ENCODE measurements at regions of chrX and their contacts with region 1.

Region 1: GRCh38 chrX:21985332-21985777 is 44.8 kb downstream of the SMS start:
- DNase-seq: peak; percentile 74
- H3K4me3 ChIP-seq: no peak overlapping the region
- H3K27ac ChIP-seq: peak overlapping the region in 1 of 4 donors; percentile 27
- H3K4me1 ChIP-seq: no peaks in the 10 kb centered on the region
- H3K27me3 ChIP-seq: no peaks in the 10 kb centered on the region
- CTCF ChIP-seq: peak; percentile 75 to 89 (median 82)
- EP300 ChIP-seq: no peak
- POLR2A ChIP-seq: no peak

Region 2: DNA sequence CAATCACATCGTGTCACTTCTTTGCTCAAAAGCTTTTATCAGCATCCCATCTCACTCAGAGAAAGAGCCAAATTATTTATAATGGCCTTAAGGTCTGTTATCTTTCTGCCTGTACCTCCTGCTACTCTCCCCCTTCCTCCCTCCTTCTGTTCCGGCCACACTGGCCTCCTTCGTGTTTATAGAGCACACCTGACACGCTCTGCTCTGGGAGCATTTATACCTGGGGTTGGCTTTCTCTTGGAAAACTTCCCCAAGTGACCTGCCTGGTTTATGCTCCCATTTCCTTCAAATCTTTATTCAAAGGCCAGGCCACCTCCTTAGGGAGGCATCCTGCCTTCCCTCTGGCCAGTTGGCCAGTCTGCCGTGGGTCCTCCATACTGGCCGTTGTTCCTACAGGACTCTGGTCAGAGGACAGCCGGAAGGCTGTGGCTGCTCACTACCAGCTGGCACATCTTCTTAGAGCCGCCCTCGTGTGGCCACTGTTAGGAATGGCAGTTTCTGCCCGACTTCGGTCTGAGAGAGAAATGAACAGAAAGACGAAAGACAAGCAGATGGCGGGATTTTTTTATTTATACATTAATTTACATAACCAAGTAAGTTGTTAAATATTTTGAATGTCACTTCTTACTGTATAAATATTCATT is 207.2 kb after region 1 on chrX:
- intact Hi-C with region 1: loop called (anchors 5 kb)
- DNase-seq: peak; percentile 80
- H3K4me3 ChIP-seq: no peak overlapping the region
- H3K27ac ChIP-seq: no peak overlapping the region
- H3K4me1 ChIP-seq: no peaks in the 10 kb centered on the region
- H3K27me3 ChIP-seq: no peaks in the 10 kb centered on the region
- CTCF ChIP-seq: peak; percentile 25 to 60 (median 46)
- EP300 ChIP-seq: no peak
- POLR2A ChIP-seq: no peak

Region 3: DNA sequence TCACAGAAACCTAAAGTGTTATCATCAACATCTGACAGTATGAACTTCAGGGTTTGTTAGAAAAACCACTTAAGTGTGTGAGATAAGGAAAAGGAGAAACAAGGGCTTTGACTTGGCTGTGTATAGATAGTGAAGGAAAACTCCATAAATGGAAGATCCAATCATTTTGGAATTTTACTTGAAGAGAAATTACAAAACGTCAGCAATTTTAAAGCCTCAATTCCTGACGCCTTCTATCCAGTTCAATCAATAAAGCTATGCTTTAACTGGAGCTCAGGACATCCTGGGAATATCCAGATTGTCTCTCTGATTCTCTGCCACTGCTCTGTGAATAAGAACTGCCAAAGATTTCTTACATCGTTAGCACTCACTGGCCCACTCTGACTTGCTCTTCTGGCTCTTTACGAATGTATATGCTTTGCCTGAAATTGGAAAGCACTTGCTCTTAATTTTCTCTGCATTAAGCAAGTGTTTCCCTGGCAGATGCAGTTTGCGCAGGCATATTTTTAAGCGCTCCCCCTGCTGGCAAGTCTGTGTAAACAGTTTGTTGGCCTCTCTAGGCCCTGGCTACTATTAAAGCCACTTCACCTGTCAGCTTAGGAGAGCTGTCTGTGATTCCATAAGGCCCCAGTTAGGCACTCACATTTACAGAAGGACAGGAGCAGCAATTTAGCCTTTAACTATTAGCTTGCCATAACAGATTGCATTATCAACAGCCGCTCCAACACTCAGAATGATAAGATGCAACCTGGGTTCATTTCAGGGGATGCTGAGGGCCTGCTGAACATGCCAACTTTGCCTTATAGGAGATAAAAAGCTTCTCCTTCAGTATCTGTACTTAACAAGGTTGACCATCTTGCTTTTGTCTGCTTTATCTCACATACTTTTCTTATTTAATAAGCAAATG is 763.0 kb after region 1 on chrX:
- intact Hi-C with region 1: loop called (anchors 5 kb)
- DNase-seq: no peak
- H3K4me3 ChIP-seq: no peak overlapping the region
- H3K27ac ChIP-seq: no peak overlapping the region
- H3K4me1 ChIP-seq: peaks cover 0 to 12% (median 0%) of the 10 kb centered on the region in 4 donors
- H3K27me3 ChIP-seq: no peaks in the 10 kb centered on the region
- CTCF ChIP-seq: peak; percentile 26 to 59 (median 42)
- EP300 ChIP-seq: no peak
- POLR2A ChIP-seq: no peak

Region 4: GRCh38 chrX:23327104-23327503 is 1341.7 kb after region 1 on chrX:
- intact Hi-C with region 1: loop called (anchors 10 kb)
- DNase-seq: no peak
- H3K4me3 ChIP-seq: no peak overlapping the region
- H3K27ac ChIP-seq: no peak overlapping the region
- H3K4me1 ChIP-seq: no peaks in the 10 kb centered on the region
- H3K27me3 ChIP-seq: no peaks in the 10 kb centered on the region
- CTCF ChIP-seq: no peak
- EP300 ChIP-seq: no peak
- POLR2A ChIP-seq: no peak

Region 5: GRCh38 chrX:23554304-23554703 is 1568.9 kb after region 1 on chrX:
- intact Hi-C with region 1: loop called (anchors 5 kb)
- DNase-seq: no peak
- H3K4me3 ChIP-seq: no peak overlapping the region
- H3K27ac ChIP-seq: no peak overlapping the region
- H3K4me1 ChIP-seq: no peaks in the 10 kb centered on the region
- H3K27me3 ChIP-seq: no peaks in the 10 kb centered on the region
- CTCF ChIP-seq: peak in 3 of 4 experiments; percentile 25 to 35 (median 29)
- EP300 ChIP-seq: no peak
- POLR2A ChIP-seq: no peak

Region 6: DNA sequence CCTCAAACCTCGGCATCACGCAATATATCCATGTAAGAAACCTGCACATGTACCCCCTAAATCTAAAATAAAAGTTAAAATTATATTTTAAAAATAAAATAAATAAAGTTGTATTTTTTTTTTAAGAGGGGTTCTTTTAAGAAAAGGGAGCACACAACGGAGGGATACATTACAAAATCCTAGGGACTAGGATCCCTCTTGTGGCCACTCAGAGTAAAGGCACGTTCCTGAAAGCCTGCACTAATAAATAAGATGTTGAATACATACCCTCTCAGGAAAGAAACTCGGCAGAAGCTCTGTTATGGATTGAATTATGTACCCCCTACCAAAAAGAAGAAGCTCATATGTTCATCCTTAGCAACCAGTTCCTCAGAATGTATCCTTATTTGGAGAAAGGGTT is 1631.0 kb after region 1 on chrX:
- intact Hi-C with region 1: loop called (anchors 5 kb)
- DNase-seq: no peak
- H3K4me3 ChIP-seq: no peak overlapping the region
- H3K27ac ChIP-seq: no peak overlapping the region
- H3K4me1 ChIP-seq: no peaks in the 10 kb centered on the region
- H3K27me3 ChIP-seq: no peaks in the 10 kb centered on the region
- CTCF ChIP-seq: peak in 3 of 4 experiments; percentile 27 to 54 (median 29)
- EP300 ChIP-seq: no peak
- POLR2A ChIP-seq: no peak

Measured in sigmoid colon (tissue), 7 donors.